Activated naive CD4-positive, alpha-beta T cell treated with anti-CD3 and anti-CD28 coated beads for 36 hours (primary cell): ENCODE measurements at regions of chr16 and their contacts with region 1.

Region 1: DNA sequence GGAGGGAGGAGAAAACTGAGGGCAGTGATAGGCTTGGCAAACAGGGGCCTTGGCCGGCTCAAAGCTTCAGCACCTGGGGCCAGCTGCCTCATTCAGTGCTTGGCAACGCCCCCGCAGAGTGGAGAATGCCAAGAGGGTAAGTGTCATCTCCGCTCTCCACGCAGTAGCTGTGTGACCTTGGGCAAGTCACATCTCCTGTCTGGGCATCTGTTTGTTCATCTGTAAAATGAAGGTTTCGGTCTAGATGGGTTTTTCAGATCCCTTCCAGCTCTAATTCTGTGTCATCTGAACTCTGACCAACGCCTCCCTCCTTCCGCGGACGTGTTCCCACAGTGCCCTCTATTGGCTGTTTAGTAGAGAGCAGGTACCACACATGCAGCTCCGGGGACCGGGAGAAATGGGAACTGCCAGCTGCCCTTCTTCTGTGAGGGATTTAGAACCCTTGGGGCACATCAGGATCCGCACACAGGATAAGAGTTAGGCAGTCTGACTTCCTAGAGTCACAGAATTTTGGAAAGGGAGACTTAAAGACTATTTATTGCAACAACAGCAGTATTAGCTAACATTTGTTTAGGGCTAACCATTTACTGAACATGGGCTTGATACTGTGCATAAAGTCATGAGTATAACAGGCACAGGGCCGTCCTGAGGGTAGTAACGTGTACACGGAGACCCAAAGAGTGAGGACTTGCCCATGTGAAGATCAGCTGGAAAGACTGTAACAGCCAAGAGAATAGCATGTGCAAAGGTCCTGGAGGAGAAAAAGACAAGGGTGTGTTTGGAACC is 26.8 kb downstream of the GP2 start:
- DNase-seq: peak; percentile 53
- H3K4me3 Mint-ChIP-seq: no peak overlapping the region
- H3K27ac Mint-ChIP-seq: no peak overlapping the region
- H3K4me1 Mint-ChIP-seq: no peaks in the 10 kb centered on the region
- H3K27me3 Mint-ChIP-seq: peaks cover 12% of the 10 kb centered on the region

Region 2: GRCh38 chr16:19898924-19899604 is 401.4 kb before region 1 on chr16:
- CTCF ChIA-PET with region 1: interaction called, 4 read pairs
- intact Hi-C with region 1: loop called (anchors 2 kb)
- DNase-seq: peak; percentile 71
- H3K4me3 Mint-ChIP-seq: no peak overlapping the region
- H3K27ac Mint-ChIP-seq: no peak overlapping the region
- H3K4me1 Mint-ChIP-seq: peaks cover 1% of the 10 kb centered on the region
- H3K27me3 Mint-ChIP-seq: peaks cover 2% of the 10 kb centered on the region

Region 3: DNA sequence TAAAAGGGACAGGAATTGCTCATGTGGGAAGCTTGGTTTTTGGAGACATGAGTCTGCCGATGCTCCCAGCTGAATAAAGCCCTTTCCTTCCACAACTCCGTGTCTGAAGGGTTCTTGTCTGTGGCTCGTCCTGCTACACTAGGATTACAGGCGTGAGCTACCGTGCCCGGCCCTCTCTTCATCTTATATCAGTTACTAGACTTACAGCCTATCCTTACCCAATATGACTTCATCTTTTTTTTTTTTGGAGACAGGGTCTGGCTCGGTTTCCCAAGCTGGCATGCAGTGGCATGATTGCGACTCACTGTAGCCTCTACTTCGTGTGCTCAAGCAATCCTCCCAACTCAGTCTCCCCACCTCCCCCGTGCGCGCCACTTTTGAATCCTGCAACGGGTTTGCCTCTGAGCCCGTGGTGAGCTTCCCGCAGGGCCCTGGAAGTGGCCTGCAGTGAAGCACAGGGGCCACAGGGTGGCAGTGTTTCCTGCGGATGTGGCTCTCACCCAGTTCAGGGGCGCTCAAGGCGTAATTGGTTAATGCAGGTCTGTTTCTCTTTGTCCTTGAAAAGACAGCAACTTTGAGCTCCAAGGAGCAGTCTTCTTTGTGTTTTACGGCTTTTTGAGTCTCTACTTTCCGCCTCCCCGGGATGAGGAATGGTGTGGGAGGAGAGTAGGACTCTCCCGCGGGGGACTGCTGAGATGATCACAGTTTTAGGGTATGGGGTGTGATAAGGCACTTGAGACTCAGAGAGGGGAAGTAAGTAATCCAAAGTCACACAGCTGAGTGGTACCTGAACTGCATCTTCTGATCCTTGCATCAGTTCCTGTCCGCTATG is 393.1 kb before region 1 on chr16:
- CTCF ChIA-PET with region 1: interaction called, 46 read pairs
- intact Hi-C with region 1: loop called (anchors 1 kb)
- DNase-seq: peak; percentile 79
- H3K4me3 Mint-ChIP-seq: no peak overlapping the region
- H3K27ac Mint-ChIP-seq: no peak overlapping the region
- H3K4me1 Mint-ChIP-seq: peaks cover 8% of the 10 kb centered on the region
- H3K27me3 Mint-ChIP-seq: peaks cover 14% of the 10 kb centered on the region

Region 4: DNA sequence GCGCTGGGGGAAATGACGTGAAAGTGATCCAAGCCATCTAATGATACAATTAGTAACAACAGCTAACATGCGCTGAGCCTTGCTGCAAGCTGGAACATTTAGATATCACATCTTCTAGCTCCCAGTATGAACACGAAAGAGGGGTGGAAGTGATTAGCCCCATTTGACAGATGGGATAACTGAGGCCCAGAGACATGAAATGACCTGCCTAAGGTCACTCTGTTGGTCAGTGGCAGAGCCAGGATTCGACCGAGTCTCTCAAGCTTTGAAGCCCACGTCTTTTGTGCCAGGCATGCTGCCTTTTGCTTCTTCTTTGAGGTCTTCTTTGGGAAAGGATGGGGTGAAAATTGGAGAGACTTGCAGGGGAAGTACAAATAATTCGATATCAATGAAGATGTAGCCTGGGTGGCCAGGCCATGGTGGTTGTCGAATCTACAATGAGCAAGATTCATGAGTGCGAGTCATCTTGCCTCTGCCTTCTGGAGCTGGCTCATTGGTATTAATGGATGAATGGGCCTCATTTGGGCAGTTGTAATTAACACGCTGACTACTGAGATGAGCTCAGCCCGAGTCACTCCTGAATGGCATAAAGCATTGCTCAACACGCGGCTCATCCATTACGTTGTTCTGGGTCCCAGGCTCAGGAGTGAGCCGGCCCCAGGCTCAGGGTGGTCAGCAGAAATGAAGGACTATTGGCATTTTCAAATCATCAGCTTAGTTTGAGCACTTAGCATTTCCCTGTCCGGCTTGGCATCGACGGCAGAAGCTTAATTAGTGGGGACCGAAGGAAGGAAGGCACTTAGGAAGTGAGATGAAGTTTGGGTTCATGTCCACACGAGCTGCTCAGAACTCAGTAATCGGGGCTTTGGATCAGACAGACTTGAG is 387.8 kb before region 1 on chr16:
- CTCF ChIA-PET with region 1: interaction called, 46 read pairs
- intact Hi-C with region 1: loop called (anchors 1 kb)
- DNase-seq: no peak
- H3K4me3 Mint-ChIP-seq: no peak overlapping the region
- H3K27ac Mint-ChIP-seq: no peak overlapping the region
- H3K4me1 Mint-ChIP-seq: peaks cover 3% of the 10 kb centered on the region
- H3K27me3 Mint-ChIP-seq: peaks cover 8% of the 10 kb centered on the region

Region 5: DNA sequence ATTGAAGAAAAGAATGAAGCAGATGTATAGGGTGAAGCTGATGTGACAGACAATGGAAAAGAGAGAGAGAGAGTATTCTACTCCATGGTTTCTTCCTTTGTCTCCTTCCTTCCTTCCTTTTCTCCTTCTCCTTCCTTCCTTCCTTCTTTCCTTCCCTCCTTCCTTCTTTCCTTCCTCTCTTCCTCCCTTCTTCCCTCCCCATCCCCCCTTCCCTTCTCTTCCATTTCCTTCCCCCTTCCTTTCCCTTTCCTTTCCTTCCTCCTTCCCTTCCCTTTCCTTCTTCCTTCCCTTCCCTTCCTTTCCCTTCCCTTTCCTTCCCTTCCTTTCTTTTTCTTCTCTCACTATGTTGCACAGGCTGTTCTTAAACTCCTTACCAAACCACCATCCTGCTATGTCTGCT is 171.1 kb before region 1 on chr16:
- CTCF ChIA-PET with region 1: no interaction called
- intact Hi-C with region 1: no loop called
- DNase-seq: no peak
- H3K4me3 Mint-ChIP-seq: no peak overlapping the region
- H3K27ac Mint-ChIP-seq: no peak overlapping the region
- H3K4me1 Mint-ChIP-seq: no peaks in the 10 kb centered on the region
- H3K27me3 Mint-ChIP-seq: no peaks in the 10 kb centered on the region

Region 6: DNA sequence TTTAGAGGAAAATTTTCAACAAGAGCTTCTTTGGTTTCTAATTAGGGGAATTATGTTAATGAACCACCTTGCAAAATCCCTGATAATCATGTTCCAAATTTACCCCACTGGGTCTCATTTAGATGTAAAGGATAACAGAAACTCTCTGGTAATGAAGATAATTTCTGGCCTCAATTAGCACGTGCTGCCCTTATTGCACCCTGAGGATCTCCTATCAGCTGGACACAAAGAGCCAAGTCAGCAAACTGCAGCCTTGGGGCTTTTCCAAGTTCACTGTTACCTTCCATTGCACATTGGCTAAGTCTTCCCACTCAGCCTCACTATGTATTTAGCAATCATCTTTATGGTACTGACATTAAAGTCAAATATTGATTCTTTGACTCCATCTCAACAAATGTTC is 51.3 kb before region 1 on chr16:
- CTCF ChIA-PET with region 1: no interaction called
- intact Hi-C with region 1: no loop called
- DNase-seq: no peak
- H3K4me3 Mint-ChIP-seq: no peak overlapping the region
- H3K27ac Mint-ChIP-seq: no peak overlapping the region
- H3K4me1 Mint-ChIP-seq: no peaks in the 10 kb centered on the region
- H3K27me3 Mint-ChIP-seq: peaks cover 2% of the 10 kb centered on the region